CD8-positive, alpha-beta T cell (primary cell): ENCODE measurements at regions of chr2 and their contacts with region 1.

Region 1: DNA sequence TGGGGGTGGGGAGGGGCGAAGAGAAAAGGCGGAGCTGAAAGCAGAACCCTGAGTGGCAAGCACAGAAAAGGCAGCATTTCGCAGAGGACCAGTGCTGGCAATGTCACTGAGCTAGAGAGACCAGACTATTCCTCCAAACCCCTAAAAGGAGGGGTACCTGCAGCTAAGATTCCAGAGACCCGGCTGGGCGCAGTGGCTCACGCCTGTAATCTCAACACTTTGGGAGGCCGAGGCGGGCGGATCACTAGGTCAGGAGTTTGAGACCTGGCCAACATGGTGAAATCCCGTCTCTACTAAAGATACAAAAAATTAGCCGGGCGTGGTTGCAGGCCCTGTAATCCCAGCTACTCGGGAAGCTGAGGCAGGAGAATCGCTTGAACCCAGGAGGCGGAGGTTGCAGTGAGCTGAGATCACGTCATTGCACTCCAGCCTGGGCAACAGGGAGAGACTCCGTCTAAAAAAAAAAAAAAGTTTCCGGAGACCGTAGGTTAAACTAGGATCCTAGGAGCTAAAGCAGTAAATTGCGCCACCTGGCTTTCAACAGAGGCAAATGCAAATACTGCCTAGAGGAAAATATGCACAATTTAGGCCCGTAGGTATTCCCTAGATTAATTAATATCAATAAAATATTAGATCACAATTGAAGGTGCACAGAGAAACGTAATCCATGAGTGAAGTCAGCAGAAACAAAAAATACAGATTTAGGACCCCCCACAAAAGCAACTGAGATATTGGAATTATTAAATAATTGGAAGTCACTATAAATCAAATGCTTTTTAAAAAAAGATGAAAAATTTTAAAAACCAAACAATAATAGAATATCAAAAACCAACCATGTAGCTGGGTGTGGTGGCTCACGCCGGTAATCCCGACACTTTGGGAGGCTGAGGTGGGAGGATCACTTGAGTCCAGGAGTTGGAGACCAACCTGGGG is 4.9 kb downstream of the UCN start:
- DNase-seq: peak in 5 of 9 experiments; percentile 43 to 76 (median 52)
- ATAC-seq: peak; percentile 69
- H3K4me3 ChIP-seq: peak overlapping the region; percentile 2 to 45
- H3K4me3 Mint-ChIP-seq: peak overlapping the region; percentile 74
- H3K27ac ChIP-seq: no peak overlapping the region
- H3K27ac Mint-ChIP-seq: no peak overlapping the region
- H3K4me1 ChIP-seq: peaks cover 14% of the 10 kb centered on the region
- H3K4me1 Mint-ChIP-seq: peaks cover 9% of the 10 kb centered on the region
- H3K27me3 ChIP-seq: peaks cover 5 to 6% of the 10 kb centered on the region in 2 experiments
- H3K27me3 Mint-ChIP-seq: peaks cover 28% of the 10 kb centered on the region
- CTCF ChIP-seq: peak; percentile 90

Region 2: DNA sequence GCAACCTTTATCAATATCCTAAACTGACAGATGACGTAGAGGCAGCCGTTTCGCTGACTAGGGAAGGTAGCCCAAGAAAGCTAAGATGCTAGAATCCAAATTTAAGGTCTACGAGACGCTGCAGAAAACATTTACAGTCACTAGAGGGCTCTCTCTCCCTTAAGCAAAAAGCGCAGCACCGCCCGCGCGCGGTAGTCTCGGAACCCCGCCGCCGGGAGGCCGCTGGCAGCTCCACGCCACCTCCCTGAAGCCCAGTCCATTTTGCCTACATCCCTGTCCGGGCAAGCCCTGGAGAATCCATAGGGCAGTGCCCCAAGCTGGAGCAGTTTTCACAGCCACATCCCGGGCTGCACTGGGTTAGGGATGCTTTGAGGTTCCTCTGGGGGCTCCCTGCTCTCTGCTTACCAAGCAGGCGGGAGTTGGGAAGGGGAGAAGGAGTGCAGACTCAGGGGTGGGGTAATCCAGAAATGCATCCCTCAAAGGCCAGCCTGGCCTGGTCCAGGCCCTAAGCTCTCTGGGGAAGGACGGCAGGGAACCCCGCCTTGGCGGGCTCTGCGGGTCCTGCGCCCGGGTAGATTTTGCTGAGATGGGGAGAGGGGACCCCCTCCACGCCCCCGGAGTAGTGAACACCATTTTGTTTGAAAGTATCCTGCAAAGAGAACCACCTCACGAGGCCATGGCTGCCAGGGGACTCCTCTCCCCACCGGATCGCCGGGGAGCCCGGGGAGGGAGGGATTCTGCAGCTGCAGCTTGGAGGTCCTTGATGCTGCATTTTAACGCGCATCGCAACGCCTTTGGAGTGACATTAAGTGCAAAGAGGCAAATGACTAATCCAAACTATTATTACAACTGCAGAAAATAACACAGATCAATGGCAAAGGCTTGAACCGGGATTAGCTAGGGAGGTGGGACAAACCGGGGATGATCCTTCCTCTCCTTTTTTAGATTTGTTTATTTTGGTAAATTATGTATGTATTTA is 456.7 kb before region 1 on chr2:
- CTCF ChIA-PET with region 1: interaction called, 5 read pairs
- POLR2A ChIA-PET with region 1: no interaction called
- intact Hi-C with region 1: loop called in 1 of 2 experiments (anchors 2 kb)
- DNase-seq: peak in 8 of 9 experiments; percentile 31 to 77 (median 60)
- ATAC-seq: peak; percentile 81
- H3K4me3 ChIP-seq: no peak overlapping the region
- H3K4me3 Mint-ChIP-seq: peak overlapping the region; percentile 75
- H3K27ac ChIP-seq: no peak overlapping the region
- H3K27ac Mint-ChIP-seq: no peak overlapping the region
- H3K4me1 ChIP-seq: peaks cover 32% of the 10 kb centered on the region
- H3K4me1 Mint-ChIP-seq: peaks cover 20% of the 10 kb centered on the region
- H3K27me3 ChIP-seq: peaks cover 31 to 43% of the 10 kb centered on the region in 2 experiments
- H3K27me3 Mint-ChIP-seq: peaks cover 57% of the 10 kb centered on the region
- CTCF ChIP-seq: peak; percentile 56

Region 3: GRCh38 chr2:27095745-27096651 is 207.4 kb before region 1 on chr2:
- CTCF ChIA-PET with region 1: interaction called, 9 read pairs
- POLR2A ChIA-PET with region 1: no interaction called
- intact Hi-C with region 1: loop called (anchors 1 kb)
- DNase-seq: peak in 5 of 9 experiments; percentile 32 to 69 (median 57)
- ATAC-seq: peak; percentile 88
- H3K4me3 ChIP-seq: peak overlapping the region; percentile 21 to 42
- H3K4me3 Mint-ChIP-seq: peak overlapping the region; percentile 61
- H3K27ac ChIP-seq: no peak overlapping the region
- H3K27ac Mint-ChIP-seq: no peak overlapping the region
- H3K4me1 ChIP-seq: peaks cover 9% of the 10 kb centered on the region
- H3K4me1 Mint-ChIP-seq: peaks cover 11% of the 10 kb centered on the region
- H3K27me3 ChIP-seq: no peaks in the 10 kb centered on the region
- H3K27me3 Mint-ChIP-seq: no peaks in the 10 kb centered on the region
- CTCF ChIP-seq: no peak

Region 4: GRCh38 chr2:27264753-27265535 is 38.4 kb before region 1 on chr2:
- CTCF ChIA-PET with region 1: interaction called, 17 read pairs
- POLR2A ChIA-PET with region 1: no interaction called
- intact Hi-C with region 1: no loop called
- DNase-seq: peak; percentile 34 to 89 (median 64)
- ATAC-seq: peak; percentile 66
- H3K4me3 ChIP-seq: peak overlapping the region; percentile 48 to 55
- H3K4me3 Mint-ChIP-seq: peak overlapping the region; percentile 77
- H3K27ac ChIP-seq: no peak overlapping the region
- H3K27ac Mint-ChIP-seq: no peak overlapping the region
- H3K4me1 ChIP-seq: peaks cover 24% of the 10 kb centered on the region
- H3K4me1 Mint-ChIP-seq: peaks cover 26% of the 10 kb centered on the region
- H3K27me3 ChIP-seq: peaks cover 26 to 34% of the 10 kb centered on the region in 2 experiments
- H3K27me3 Mint-ChIP-seq: peaks cover 38% of the 10 kb centered on the region
- CTCF ChIP-seq: peak; percentile 54

Region 5: DNA sequence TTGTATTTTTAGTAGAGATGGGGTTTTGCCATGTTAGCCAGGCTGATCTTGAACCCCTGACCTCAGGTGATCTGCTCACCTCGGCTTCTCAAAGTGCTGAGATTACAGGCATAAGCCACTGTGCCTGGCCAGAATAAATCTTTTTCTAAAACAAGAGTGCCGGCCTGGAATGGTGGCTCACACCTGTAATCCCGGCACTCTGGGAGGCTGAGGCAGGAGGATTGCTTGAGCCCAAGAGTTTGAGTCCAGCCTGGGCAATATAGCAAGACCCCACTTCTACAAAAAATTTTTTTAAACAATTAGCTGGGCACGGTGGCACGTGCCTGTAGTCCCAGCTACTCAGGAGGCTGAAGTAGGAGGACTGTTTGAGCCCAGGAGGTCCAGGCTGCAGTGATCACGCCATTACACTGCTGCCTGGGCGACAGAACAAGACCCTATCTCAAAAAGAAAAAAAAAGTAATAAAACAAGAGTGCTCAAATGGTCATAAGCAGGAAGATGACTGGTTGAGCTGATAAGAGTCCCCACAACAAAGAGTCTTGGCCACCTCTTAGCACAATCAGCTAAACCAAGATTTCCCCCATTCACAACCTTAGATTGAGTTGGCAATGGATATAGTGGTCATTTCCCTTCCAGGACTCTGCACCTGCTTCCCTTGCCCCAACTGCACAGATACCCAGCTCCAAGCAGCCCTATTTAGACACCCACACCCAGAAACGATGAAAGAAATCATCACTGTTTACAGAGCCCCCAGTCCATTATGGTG is 10.7 kb after region 1 on chr2:
- CTCF ChIA-PET with region 1: interaction called, 15 read pairs
- POLR2A ChIA-PET with region 1: interaction called, 5 read pairs
- intact Hi-C with region 1: no loop called
- DNase-seq: no peak
- ATAC-seq: no peak
- H3K4me3 ChIP-seq: no peak overlapping the region
- H3K4me3 Mint-ChIP-seq: no peak overlapping the region
- H3K27ac ChIP-seq: no peak overlapping the region
- H3K27ac Mint-ChIP-seq: no peak overlapping the region
- H3K4me1 ChIP-seq: no peaks in the 10 kb centered on the region
- H3K4me1 Mint-ChIP-seq: no peaks in the 10 kb centered on the region
- H3K27me3 ChIP-seq: no peaks in the 10 kb centered on the region
- H3K27me3 Mint-ChIP-seq: no peaks in the 10 kb centered on the region
- CTCF ChIP-seq: no peak